ENCODE measurements at regions of chr6 and their contacts with region 1.

Region 1: DNA sequence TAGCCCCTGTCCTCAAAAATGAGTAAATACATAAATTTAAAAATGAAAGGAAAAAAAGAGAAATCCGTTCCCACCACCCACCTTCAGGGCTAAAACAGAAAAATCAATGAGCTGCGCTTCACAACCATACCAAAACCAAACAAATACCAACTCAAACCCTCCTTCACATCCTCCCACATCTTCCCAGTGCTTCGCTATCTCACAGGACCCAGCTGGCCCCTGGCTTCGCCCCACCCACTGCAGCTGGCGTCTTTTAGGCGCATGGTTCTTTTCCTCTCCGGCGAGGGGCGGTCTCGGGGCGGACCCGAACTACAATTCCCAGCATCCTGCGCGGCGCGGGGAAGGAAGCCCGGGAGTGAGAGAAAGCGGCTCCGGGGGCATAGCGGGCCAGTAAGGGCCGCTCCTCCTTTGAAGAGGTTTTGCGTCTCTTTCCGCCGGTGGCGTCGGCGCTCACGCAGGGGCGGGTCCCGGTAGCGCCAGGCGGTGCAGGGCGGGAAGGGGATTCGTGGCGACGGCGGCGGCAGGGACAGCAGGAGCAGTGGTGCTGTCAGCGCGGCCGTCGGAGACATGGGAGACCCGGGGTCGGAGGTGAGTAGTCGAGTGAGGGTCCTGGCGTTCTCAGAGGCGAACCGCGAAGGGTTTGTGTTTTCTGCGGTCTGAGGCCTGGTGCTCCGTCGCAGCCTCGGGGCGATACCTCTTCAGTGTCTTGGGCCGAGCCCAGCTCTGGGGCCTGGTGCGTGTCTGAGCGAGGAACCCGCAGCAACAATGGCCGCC is at the start of gene ZNF451:
- DNase-seq: peak; percentile 98
- H3K4me3 ChIP-seq: peak within 1 kb of the TSS; percentile 70 to 77
- H3K27ac ChIP-seq: peak within 1 kb of the TSS; percentile 84 to 88
- H3K4me1 ChIP-seq: peaks cover 14% of the 10 kb centered on the region
- H3K27me3 ChIP-seq: no peaks in the 10 kb centered on the region
- CTCF ChIP-seq: no peak
- POLR2A ChIP-seq: peak; percentile 60
- total RNA-seq, gene ZNF451: 70.1 to 106 TPM

Region 2: GRCh38 chr6:56949260-56949659 is 140.6 kb before region 1 on chr6:
- intact Hi-C with region 1: no loop called
- DNase-seq: no peak
- H3K4me3 ChIP-seq: no peak overlapping the region
- H3K27ac ChIP-seq: no peak overlapping the region
- H3K4me1 ChIP-seq: peaks cover 6% of the 10 kb centered on the region
- H3K27me3 ChIP-seq: no peaks in the 10 kb centered on the region
- CTCF ChIP-seq: no peak
- POLR2A ChIP-seq: no peak

Region 3: GRCh38 chr6:56959938-56960337 is 129.9 kb before region 1 on chr6:
- intact Hi-C with region 1: no loop called
- DNase-seq: no peak
- H3K4me3 ChIP-seq: no peak overlapping the region
- H3K27ac ChIP-seq: no peak overlapping the region
- H3K4me1 ChIP-seq: no peaks in the 10 kb centered on the region
- H3K27me3 ChIP-seq: no peaks in the 10 kb centered on the region
- CTCF ChIP-seq: no peak
- POLR2A ChIP-seq: no peak

Region 4: DNA sequence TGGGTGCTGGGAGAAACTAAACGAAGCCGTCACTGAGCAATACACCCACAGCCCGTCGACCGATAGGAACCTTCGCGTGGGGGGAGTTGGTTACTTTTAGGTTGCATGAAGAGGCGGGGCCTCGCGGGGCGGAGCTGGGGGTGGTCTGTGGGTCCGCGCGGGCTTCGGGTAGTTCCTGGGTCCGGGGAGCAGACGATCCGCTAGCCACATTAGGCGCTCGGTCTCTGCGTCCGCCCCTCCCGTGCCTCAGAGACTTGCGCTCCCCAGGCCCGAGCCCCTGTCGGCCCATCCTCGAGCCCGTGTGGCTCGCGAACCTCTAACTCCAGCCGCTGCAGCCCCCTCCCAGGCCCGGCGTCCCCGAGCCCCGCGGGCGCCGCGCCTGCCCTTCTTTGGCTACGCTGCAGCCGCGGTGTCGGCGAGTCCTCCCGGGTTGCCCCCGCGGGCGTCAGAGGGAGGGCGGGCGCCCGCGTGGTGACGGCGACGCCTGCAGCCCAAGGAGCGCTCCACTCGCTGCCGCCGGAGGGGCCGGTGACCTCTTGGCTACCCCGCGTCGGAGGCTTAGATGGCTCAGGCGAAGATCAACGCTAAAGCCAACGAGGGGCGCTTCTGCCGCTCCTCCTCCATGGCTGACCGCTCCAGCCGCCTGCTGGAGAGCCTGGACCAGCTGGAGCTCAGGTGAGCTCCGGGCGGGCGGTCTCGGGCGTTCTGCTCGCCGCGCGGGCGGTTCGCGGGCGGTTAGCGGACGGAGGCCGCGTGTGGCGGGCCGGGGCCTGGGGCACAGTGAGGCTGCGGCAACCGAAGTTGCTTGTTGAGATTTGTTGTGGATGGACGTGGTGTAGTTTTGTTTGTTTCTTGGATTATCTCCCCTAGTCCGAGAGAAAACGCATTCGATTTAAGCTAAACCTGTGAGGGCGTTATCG is 82.5 kb after region 1 on chr6 and contains the start of gene BAG2:
- intact Hi-C with region 1: loop called (anchors 5 kb)
- DNase-seq: peak; percentile 96
- H3K4me3 ChIP-seq: peak within 1 kb of the TSS; percentile 82 to 85
- H3K27ac ChIP-seq: peak within 1 kb of the TSS; percentile 93 to 97
- H3K4me1 ChIP-seq: no peaks in the 10 kb centered on the region
- H3K27me3 ChIP-seq: no peaks in the 10 kb centered on the region
- CTCF ChIP-seq: peak in 1 of 3 experiments; percentile 46
- POLR2A ChIP-seq: no peak
- total RNA-seq, gene BAG2: 5.3 to 6.1 TPM